Activated T-helper 2 cell treated with anti-CD3 and anti-CD28 coated beads, Interferon-gamma antibody, Interleukin-2, Interleukin-4, amounts not matched to agents 10 μg/mL and 5 μg/mL and 100 μg/mL, durations not matched to agents 14 hours and 24 hours and 36 hours (primary cell): ENCODE measurements at regions of chr12 and their contacts with region 1.

Region 1: DNA sequence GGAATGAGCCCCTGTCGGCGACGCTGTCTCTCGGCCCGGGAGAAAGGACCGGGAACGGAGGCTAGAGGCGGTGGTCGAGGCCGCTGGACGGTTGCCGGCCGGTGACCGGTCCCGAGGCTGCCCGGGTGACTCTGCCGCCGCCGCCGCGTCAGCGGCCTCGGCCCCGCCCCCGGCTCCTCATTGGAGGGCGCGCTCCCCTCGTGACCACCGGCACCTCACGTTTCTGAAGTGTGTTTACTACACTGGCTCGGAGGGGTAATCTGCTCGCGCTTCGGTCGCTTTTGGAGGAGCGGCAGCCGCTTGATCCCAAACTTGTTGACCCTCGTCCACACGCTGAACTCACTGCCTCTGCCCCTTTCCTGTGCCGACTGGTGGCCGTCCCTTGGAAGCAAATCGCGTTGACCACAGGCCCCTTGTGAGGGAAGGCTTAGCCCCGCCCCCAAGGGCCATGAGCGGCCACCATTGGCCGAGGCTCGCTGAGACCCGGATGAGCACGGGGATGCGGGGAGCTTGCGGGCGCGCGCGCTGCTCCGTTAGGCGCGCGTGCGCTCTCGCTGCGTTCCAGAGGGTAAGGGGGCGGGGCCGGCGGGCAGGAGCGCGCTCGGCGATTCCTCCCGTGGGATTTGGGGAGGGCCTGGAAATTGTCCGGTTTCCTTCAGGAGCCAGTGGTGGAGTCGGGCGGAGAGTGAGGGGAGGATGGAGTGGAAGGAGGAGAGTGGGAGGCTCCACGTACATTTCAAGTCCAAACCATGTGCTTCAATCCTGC is at the start of gene CRY1:
- DNase-seq: peak; percentile 92
- H3K4me3 Mint-ChIP-seq: no peak within 1 kb of the TSS
- H3K27ac Mint-ChIP-seq: peak within 1 kb of the TSS; percentile 60
- H3K4me1 Mint-ChIP-seq: peaks cover 2% of the 10 kb centered on the region
- H3K27me3 Mint-ChIP-seq: peaks cover 10% of the 10 kb centered on the region
- total RNA-seq, gene CRY1: 25.4 and 26.0 TPM in 2 replicates

Region 2: GRCh38 chr12:106774005-106774807 is 319.4 kb before region 1 on chr12 and contains the start of gene RIC8B:
- intact Hi-C with region 1: loop called (anchors 1 kb)
- DNase-seq: peak; percentile 76
- H3K4me3 Mint-ChIP-seq: peak within 1 kb of the TSS; percentile 96
- H3K27ac Mint-ChIP-seq: peak within 1 kb of the TSS; percentile 92
- H3K4me1 Mint-ChIP-seq: peaks cover 18% of the 10 kb centered on the region
- H3K27me3 Mint-ChIP-seq: peaks cover 5% of the 10 kb centered on the region
- total RNA-seq, gene RIC8B: 11.4 and 16.4 TPM in 2 replicates

Region 3: GRCh38 chr12:106955377-106956047 is 138.1 kb before region 1 on chr12 and contains the start of gene TMEM263:
- intact Hi-C with region 1: loop called (anchors 1 kb)
- DNase-seq: peak; percentile 89
- H3K4me3 Mint-ChIP-seq: peak within 1 kb of the TSS; percentile 93
- H3K27ac Mint-ChIP-seq: peak within 1 kb of the TSS; percentile 93
- H3K4me1 Mint-ChIP-seq: peaks cover 23% of the 10 kb centered on the region
- H3K27me3 Mint-ChIP-seq: peaks cover 4% of the 10 kb centered on the region
- total RNA-seq, gene TMEM263: 30.6 and 31.8 TPM in 2 replicates

Region 4: GRCh38 chr12:106986625-106987430 is 106.8 kb before region 1 on chr12 and contains the start of gene MTERF2:
- intact Hi-C with region 1: loop called (anchors 1 kb)
- DNase-seq: peak; percentile 63
- H3K4me3 Mint-ChIP-seq: peak within 1 kb of the TSS; percentile 84
- H3K27ac Mint-ChIP-seq: peak within 1 kb of the TSS; percentile 53
- H3K4me1 Mint-ChIP-seq: peaks cover 34% of the 10 kb centered on the region
- H3K27me3 Mint-ChIP-seq: peaks cover 3% of the 10 kb centered on the region
- total RNA-seq, gene MTERF2: 2.3 and 2.4 TPM in 2 replicates

Region 5: DNA sequence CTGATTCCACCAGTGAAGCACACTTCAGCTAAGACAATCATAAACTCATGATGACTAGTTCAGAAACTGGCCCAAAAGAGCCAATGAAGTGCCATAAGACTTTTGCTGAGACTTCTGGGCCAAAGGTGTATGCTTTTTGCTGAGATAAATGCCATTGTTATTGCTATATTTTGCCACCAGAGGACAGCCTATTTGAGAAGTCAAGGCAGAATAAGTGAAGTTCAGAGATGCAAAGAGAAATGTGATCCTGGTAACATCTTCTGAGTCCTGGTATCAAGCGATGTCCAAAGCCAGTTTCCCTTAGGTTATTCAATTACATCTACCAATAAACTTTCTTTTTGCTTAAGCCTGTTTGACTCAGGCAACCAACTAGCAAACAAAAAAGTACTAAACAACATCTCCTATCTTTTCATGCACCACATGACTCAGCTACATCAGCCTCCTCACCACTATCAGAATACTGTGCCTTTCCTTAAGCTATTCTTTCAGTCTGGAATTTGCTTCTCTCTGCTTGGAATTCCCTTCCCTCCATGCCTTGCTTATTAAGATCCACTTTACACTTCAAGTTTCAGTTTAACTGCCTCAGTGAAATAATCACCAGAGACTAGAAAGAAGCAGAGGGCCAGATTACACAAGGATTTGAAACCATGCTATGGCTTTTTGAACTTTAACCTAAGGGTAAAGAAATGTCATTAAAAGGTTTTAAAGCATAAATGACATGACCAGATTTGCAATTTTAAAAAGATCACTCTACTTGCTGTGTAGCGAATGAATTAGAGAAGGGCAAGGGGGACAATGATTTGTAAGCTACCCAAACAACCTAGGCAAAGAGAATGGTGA is 14.2 kb before region 1 on chr12:
- intact Hi-C with region 1: no loop called
- DNase-seq: no peak
- H3K4me3 Mint-ChIP-seq: no peak overlapping the region
- H3K27ac Mint-ChIP-seq: no peak overlapping the region
- H3K4me1 Mint-ChIP-seq: no peaks in the 10 kb centered on the region
- H3K27me3 Mint-ChIP-seq: no peaks in the 10 kb centered on the region

Region 6: DNA sequence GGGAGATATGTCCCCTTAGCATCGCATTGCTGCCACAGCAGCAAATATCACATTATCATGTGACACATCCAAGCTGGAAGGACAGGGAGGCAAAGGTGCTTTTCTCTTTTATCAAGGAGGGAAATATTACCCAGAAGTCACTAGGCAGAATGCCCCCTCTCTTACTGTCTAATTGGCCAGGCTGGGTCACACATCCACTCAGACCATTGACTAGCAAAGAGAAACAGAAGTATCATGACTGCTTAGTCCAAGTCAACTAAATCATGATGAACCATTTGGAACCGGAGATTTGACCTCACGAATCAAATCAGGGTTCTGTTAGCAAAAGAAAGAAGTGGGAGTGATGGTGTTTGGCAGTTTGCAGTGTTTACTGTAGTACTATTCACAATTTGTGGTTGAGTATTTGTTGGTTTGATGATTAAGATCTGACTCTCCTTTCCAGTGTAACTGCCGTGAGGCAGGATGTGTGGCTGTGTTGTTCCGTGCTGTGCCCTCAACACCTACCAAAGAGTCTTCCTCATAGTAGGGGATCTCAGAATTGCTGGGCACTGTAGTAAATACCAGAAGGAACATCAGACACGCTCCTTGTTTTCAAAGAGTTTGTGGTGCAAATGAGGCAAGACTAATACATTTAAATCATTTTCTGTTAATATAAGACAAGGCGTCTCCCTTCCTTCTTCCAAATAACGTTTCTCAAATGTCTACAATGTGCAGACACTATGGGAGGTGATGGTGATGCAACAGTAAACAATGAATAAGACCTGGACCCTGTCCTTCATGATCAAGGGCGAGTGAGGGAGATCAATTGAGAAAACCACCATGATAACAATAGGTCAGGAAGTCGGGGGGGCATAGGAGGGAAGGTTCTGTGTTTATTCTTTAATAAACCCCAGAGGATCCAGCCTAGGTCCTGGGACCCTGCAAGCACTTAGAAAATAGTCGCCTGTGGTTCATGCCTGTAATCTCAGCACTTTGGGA is 194.1 kb after region 1 on chr12:
- intact Hi-C with region 1: loop called (anchors 2 kb)
- DNase-seq: peak; percentile 49
- H3K4me3 Mint-ChIP-seq: peak overlapping the region; percentile 43
- H3K27ac Mint-ChIP-seq: peak overlapping the region; percentile 82
- H3K4me1 Mint-ChIP-seq: peaks cover 18% of the 10 kb centered on the region
- H3K27me3 Mint-ChIP-seq: peaks cover 7% of the 10 kb centered on the region